ENCODE measurements at regions of chr18 and their contacts with region 1.

Region 1: DNA sequence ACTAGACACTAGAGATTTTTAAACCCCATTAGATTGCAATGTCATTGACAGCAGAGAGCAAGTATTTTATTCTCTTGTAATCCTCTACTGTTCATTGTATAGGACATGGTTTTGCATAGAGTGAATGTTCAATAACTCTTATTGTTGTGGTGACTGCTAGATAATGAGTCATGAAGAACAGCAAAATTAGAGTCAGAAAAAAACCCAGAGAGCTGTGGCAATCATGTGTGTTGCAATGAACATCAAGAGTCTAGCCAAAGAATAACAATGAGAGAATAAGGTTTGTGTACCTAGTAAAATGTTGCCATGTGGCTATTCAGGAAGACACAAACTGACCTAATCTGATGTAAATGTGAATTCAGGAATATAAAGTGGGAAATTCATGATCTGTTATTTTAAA is 684.0 kb downstream of the DSC3 start:
- DNase-seq: no peak
- ATAC-seq: no peak
- H3K4me3 ChIP-seq: no peak overlapping the region
- H3K27ac ChIP-seq: no peak overlapping the region
- H3K4me1 ChIP-seq: no peaks in the 10 kb centered on the region
- H3K27me3 ChIP-seq: no peaks in the 10 kb centered on the region
- CTCF ChIP-seq: no peak

Region 2: GRCh38 chr18:29811519-29811918 is 547.0 kb before region 1 on chr18:
- intact Hi-C with region 1: loop called in 1 of 10 experiments (anchors 10 kb)
- DNase-seq: no peak
- ATAC-seq: no peak
- H3K4me3 ChIP-seq: no peak overlapping the region
- H3K27ac ChIP-seq: no peak overlapping the region
- H3K4me1 ChIP-seq: no peaks in the 10 kb centered on the region
- H3K27me3 ChIP-seq: no peaks in the 10 kb centered on the region
- CTCF ChIP-seq: no peak

Region 3: DNA sequence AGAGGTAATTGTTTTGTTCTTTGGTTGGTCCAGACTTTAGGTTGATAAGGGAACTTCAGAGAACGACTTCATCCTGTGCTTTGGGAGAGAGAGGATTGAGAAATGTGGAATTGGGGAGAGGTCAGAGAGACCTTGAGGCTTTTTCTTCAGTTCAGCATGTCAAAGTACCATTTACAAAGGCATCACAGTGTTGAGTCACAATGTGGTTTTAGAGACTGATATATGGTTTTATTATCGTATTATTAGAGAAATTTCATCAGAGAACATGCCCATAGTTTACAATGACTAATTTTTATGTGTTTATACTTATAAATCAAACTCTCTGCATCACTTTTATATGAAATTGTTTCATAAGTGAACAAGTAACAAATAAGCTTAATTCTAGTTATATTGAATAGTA is 57.3 kb after region 1 on chr18:
- intact Hi-C with region 1: loop called in 1 of 10 experiments (anchors 10 kb)
- DNase-seq: no peak
- ATAC-seq: no peak
- H3K4me3 ChIP-seq: no peak overlapping the region
- H3K27ac ChIP-seq: no peak overlapping the region
- H3K4me1 ChIP-seq: no peaks in the 10 kb centered on the region
- H3K27me3 ChIP-seq: no peaks in the 10 kb centered on the region
- CTCF ChIP-seq: no peak

Measured in heart right ventricle (tissue), 16 donors.